Activated naive CD4-positive, alpha-beta T cell treated with anti-CD3 and anti-CD28 coated beads for 36 hours (primary cell): ENCODE measurements at regions of chr12 and their contacts with region 1.

Region 1: GRCh38 chr12:39619660-39620433 is at the start of gene ABCD2:
- DNase-seq: peak; percentile 88
- H3K4me3 Mint-ChIP-seq: no peak within 1 kb of the TSS
- H3K27ac Mint-ChIP-seq: no peak within 1 kb of the TSS
- H3K4me1 Mint-ChIP-seq: peaks cover 27% of the 10 kb centered on the region
- H3K27me3 Mint-ChIP-seq: no peaks in the 10 kb centered on the region
- total RNA-seq, gene ABCD2: 8.6 to 9.1 TPM

Region 2: DNA sequence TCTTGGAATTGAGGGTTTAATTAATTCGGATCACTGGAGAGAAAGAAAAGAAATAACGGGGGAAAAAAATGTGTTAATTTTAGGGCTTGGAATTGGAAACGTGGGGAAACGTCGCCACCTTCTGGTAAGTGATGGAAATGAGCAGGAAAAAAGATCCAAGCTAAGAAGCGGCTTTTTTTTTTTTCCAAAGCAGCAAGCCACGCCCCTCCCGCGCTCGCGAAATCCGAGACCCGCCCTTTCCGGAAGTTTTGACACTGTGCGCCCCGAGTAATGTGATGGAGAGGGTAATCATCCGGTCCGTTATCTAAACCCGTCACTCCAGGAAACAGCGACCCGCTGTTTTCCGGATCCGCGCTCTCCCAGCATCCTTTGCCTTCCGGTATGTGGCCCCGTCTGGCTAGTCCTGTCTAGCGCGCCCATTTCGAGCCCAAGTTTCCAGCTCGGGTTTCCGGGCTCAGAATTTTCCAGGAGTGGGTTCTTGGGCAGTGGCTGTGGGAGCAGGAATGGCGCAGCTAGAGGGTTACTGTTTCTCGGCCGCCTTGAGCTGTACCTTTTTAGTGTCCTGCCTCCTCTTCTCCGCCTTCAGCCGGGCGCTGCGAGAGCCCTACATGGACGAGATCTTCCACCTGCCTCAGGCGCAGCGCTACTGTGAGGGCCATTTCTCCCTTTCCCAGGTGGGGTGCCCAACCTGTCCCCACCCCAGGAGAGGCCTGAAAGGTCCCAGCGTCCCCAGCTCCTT is 1303.3 kb before region 1 on chr12 and contains the start of gene ALG10B:
- CTCF ChIA-PET with region 1: no interaction called
- intact Hi-C with region 1: loop called (anchors 5 kb)
- DNase-seq: peak; percentile 95
- H3K4me3 Mint-ChIP-seq: peak within 1 kb of the TSS; percentile 93
- H3K27ac Mint-ChIP-seq: peak within 1 kb of the TSS; percentile 91
- H3K4me1 Mint-ChIP-seq: peaks cover 22% of the 10 kb centered on the region
- H3K27me3 Mint-ChIP-seq: no peaks in the 10 kb centered on the region
- total RNA-seq, gene ALG10B: 16.6 to 17.1 TPM

Region 3: DNA sequence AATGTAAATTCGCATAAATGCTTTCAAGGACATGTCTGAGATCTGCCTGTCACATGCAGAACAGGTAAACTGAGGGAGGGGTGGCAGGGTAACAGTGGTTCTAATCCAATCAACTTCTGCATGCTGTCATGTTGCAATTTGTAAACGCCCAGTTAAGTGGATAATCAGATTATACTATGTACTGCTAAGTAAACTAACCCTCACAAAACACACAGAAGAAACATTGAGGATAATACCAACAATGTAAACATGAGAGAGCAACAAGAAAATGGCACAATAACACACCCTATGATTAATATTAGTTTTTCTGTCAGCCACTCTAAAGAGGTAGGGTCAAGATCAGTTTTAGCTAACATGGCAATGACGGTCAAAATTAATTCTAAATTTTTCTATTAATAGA is 300.7 kb before region 1 on chr12:
- CTCF ChIA-PET with region 1: no interaction called
- intact Hi-C with region 1: loop called (anchors 1 kb)
- DNase-seq: no peak
- H3K4me3 Mint-ChIP-seq: no peak overlapping the region
- H3K27ac Mint-ChIP-seq: no peak overlapping the region
- H3K4me1 Mint-ChIP-seq: no peaks in the 10 kb centered on the region
- H3K27me3 Mint-ChIP-seq: no peaks in the 10 kb centered on the region

Region 4: DNA sequence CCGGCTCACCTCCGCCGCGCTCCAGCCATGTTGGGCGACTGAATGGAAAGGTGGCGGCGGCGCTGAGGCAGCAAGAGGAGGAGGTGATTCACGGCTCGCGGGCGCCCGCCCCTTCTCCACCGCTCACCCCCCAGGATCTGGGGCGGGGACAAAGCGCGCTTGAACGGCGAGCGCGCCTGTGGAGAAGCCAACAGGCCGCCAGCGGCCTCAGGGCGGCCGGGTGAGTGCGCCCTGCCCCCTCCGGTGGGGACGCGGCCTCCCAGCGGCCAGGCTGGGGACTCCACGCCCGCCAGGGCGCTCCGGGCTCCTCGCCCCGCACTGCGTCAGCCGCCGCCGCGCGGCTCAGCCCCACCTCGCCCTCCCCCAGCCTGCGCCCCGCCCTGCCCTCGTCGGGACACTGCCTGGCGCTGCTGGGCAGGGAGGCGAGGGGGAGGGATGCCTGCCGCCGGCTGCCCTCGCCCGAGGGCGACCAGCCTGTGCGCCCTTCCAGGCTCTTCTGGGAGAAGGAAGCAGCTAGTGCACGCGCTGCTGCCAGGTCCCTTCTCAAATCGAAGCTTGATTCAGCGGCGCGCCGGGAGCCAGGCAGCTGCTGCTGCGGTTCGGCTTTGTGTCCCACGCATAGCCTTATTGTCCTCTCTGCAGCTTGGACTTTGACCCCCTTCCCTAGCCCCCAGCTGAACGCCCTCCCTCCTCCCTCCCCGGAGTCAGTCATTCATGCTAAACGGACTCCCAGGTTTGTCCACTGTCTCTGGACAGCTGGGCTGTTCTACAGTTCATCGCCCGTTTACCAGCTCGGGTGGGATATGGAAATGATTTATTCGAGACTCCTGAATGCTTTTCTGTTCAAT is 176.5 kb before region 1 on chr12 and contains the start of gene KIF21A:
- CTCF ChIA-PET with region 1: interaction called, 4 read pairs
- intact Hi-C with region 1: loop called (anchors 1 kb)
- DNase-seq: peak; percentile 86
- H3K4me3 Mint-ChIP-seq: peak within 1 kb of the TSS; percentile 85
- H3K27ac Mint-ChIP-seq: peak within 1 kb of the TSS; percentile 85
- H3K4me1 Mint-ChIP-seq: peaks cover 14% of the 10 kb centered on the region
- H3K27me3 Mint-ChIP-seq: no peaks in the 10 kb centered on the region
- total RNA-seq, gene KIF21A: 21.4 to 22.0 TPM

Region 5: GRCh38 chr12:39526974-39527373 is 92.9 kb before region 1 on chr12:
- CTCF ChIA-PET with region 1: no interaction called
- intact Hi-C with region 1: no loop called
- DNase-seq: no peak
- H3K4me3 Mint-ChIP-seq: no peak overlapping the region
- H3K27ac Mint-ChIP-seq: no peak overlapping the region
- H3K4me1 Mint-ChIP-seq: no peaks in the 10 kb centered on the region
- H3K27me3 Mint-ChIP-seq: no peaks in the 10 kb centered on the region

Region 6: GRCh38 chr12:39595923-39596322 is 23.9 kb before region 1 on chr12:
- CTCF ChIA-PET with region 1: interaction called, 11 read pairs
- intact Hi-C with region 1: loop called (anchors 1 kb)
- DNase-seq: no peak
- H3K4me3 Mint-ChIP-seq: no peak overlapping the region
- H3K27ac Mint-ChIP-seq: peak overlapping the region; percentile 78
- H3K4me1 Mint-ChIP-seq: peaks cover 19% of the 10 kb centered on the region
- H3K27me3 Mint-ChIP-seq: no peaks in the 10 kb centered on the region

Region 7: GRCh38 chr12:40107098-40107802 is 487.4 kb after region 1 on chr12:
- CTCF ChIA-PET with region 1: no interaction called
- intact Hi-C with region 1: loop called (anchors 1 kb)
- DNase-seq: peak; percentile 94
- H3K4me3 Mint-ChIP-seq: peak overlapping the region; percentile 53
- H3K27ac Mint-ChIP-seq: no peak overlapping the region
- H3K4me1 Mint-ChIP-seq: peaks cover 37% of the 10 kb centered on the region
- H3K27me3 Mint-ChIP-seq: no peaks in the 10 kb centered on the region